A549 (cell line): ENCODE measurements at regions of chr19 and their contacts with region 1.

Region 1: DNA sequence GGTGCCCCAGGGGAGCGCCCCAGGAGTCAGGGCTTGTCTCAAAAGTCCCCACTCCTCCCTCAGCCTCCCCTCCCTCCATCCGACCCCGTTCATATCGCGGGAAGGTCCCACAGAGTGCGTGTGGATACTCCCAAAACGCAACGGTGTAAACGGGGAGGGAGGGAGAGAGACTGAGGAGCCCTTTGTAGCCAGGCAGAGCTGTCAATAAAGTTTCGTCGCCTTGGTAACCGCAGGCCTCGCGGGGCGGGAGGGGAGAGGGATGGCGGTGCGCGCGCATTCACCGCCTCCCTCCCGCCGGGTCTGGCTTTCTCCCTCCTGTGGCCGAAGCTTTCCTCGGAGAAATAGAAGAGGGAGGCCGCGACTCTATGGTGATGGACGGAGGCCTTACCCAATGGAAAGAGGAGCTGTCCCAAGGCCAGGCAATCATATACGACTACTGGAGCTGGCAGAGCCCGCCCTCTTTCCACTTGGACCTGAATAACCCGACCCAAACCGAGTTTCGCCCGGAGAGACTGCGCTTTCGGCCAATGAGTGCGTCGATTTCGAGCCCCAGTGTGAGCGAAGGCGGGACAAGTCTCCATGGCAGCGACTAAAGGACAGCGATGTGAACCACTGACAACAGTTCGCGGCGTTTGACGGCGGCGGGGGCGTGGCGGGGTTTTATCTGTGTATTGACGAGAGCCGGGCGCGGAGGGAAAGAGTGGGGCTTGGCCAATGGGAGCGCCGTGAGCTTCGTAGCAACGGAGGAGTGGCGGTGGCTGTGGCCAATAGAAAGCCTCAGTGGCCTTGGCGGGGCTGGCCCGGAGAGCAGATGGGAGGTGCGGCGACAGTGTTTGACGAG is at the start of gene KMT5C:
- DNase-seq: peak; percentile 100
- ATAC-seq: peak; percentile 81 to 92
- H3K4me3 ChIP-seq: peak within 1 kb of the TSS; percentile 63
- H3K27ac ChIP-seq: peak within 1 kb of the TSS; percentile 90 to 93
- H3K4me1 ChIP-seq: peaks cover 17% of the 10 kb centered on the region
- CTCF ChIP-seq: no peak
- EP300 ChIP-seq: no peak
- POLR2A ChIP-seq: no peak
- RAD21 ChIP-seq: no peak; a peak in 1 of 5 replicates
- polyA plus RNA-seq, gene KMT5C: 6.6 and 9.5 TPM in 2 replicates

Region 2: DNA sequence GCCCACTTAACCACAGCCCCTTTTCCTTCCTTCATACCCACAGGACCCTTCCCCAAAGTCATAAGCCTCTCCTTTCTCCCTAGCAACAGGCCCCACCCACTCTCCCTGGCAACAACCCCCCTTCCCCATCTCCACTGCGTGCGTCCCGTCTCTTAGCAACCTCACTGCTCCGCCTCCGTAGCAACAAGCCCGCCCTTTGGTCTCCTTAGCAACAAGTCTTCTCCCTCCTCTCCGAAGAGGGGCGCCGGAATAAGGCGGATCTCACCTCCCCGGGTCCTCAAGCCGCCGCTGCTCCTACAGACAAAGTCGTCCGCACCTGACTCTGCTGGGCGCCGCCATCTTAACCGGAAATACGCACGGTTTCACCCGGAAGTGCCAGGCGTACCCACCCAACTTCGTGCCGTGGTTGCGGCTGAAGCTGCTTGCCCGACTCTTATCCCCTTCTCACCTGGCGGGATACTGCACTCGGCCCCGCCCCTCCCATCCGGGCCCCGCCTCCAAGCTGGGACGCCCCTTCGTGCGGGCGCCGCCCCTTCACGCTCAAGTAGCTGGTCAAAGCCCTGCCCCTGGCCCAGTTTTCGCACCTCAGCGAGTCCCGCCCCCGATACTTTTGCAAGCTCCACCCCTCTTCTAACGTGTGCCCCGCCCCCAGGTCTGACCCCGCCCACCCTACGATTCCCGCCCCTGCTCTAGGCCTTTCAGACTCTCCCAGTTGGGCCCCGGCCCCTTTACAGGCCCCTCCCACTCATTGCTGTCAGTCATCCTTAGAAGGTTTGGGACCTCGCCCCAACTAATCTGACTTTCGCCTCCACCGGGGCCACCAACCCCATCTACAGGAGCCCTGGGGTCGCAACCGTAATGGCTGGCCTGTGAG is 59.3 kb before region 1 on chr19 and contains the start of gene HSPBP1:
- CTCF ChIA-PET with region 1: interaction called, 5 read pairs
- POLR2A ChIA-PET with region 1: interaction called, 12 read pairs
- DNase-seq: peak; percentile 85 to 100
- ATAC-seq: peak; percentile 92 to 95
- H3K4me3 ChIP-seq: peak within 1 kb of the TSS; percentile 75
- H3K27ac ChIP-seq: peak within 1 kb of the TSS; percentile 80 to 92
- H3K4me1 ChIP-seq: peaks cover 33% of the 10 kb centered on the region
- CTCF ChIP-seq: no peak
- EP300 ChIP-seq: no peak
- POLR2A ChIP-seq: peak; percentile 67
- RAD21 ChIP-seq: no peak
- polyA plus RNA-seq, gene HSPBP1: 52.1 and 55.3 TPM in 2 replicates

Region 3: DNA sequence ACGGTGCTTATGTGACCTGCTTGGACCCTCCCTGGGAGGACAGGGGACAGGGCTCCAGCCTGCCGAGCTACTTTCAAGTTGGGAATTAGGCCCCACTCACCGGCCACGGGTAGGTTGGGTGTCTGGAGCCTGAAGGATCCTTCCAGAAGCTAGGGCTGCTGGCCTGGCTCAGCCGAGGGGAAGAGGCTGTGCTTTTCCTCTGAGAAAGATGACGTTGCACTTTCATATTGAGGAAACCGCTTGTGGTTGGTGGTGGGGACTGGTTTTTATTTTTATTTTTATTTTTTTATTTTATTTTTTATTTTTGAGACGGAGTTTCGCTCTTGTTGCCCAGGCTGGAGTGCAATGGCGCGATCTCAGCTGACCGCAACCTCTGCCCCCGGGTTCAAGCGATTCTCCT is 14.1 kb before region 1 on chr19 and contains the start of gene TMEM150B:
- CTCF ChIA-PET with region 1: interaction called, 24 read pairs
- POLR2A ChIA-PET with region 1: interaction called, 18 read pairs
- DNase-seq: no peak
- ATAC-seq: no peak
- H3K4me3 ChIP-seq: no peak within 1 kb of the TSS
- H3K27ac ChIP-seq: peak within 1 kb of the TSS in 1 of 2 experiments; percentile 65; a peak in 3 of 6 replicates
- H3K4me1 ChIP-seq: peaks cover 33% of the 10 kb centered on the region
- CTCF ChIP-seq: no peak
- EP300 ChIP-seq: no peak
- POLR2A ChIP-seq: no peak
- RAD21 ChIP-seq: no peak
- polyA plus RNA-seq, gene TMEM150B: 0.39 and 0.52 TPM in 2 replicates

Region 4: GRCh38 chr19:55369671-55370304 is 30.5 kb after region 1 on chr19:
- CTCF ChIA-PET with region 1: interaction called, 7 read pairs
- POLR2A ChIA-PET with region 1: interaction called, 11 read pairs
- DNase-seq: peak; percentile 86 to 98
- ATAC-seq: peak; percentile 45 to 71
- H3K4me3 ChIP-seq: peak overlapping the region; percentile 85
- H3K27ac ChIP-seq: peak overlapping the region; percentile 91 to 96
- H3K4me1 ChIP-seq: peaks cover 61% of the 10 kb centered on the region
- CTCF ChIP-seq: no peak
- EP300 ChIP-seq: no peak
- POLR2A ChIP-seq: no peak
- RAD21 ChIP-seq: no peak

Region 5: DNA sequence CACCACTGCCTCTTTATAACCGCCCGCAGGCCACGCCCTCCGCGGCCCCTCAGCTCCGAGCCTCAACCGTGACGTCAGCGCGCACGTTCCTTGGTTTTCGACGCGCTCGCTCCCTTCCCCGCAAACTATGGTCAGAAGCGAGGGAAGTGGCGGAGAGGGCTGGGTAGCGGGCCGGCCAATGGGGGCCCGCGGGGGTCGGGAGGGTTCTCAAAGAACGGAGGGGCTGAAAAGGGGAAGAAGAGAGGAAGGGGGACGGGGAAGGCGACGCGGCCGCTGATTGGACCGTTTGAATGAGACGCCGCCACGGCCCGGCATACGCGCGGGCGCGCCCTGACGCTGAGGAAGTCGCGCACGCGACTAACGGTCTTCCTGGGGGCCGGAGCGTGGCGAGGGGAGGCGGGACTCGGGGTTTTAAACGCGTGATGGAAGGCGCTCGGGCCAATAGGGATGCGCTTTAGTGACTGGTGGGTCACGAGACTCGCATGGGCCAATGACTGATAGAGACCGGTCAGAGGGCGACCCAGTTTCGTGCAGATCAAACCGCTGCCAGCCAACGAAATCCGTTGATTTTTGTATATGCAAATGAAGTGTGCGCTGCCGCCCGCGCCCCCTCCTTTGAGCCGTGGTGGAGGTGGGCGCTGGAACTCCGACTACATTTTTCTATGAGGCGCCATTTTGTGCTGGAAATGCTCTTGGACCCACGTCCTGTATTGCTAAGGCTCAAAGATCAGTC is 68.7 kb after region 1 on chr19:
- CTCF ChIA-PET with region 1: interaction called, 3 read pairs
- POLR2A ChIA-PET with region 1: interaction called, 14 read pairs
- DNase-seq: peak; percentile 100
- ATAC-seq: peak; percentile 90 to 96
- H3K4me3 ChIP-seq: peak overlapping the region; percentile 98
- H3K27ac ChIP-seq: peak overlapping the region; percentile 95 to 97
- H3K4me1 ChIP-seq: peaks cover 36% of the 10 kb centered on the region
- CTCF ChIP-seq: no peak
- EP300 ChIP-seq: no peak
- POLR2A ChIP-seq: no peak
- RAD21 ChIP-seq: no peak